Ovary (tissue), 10 donors: ENCODE measurements at regions of chr15 and their contacts with region 1.

Region 1: DNA sequence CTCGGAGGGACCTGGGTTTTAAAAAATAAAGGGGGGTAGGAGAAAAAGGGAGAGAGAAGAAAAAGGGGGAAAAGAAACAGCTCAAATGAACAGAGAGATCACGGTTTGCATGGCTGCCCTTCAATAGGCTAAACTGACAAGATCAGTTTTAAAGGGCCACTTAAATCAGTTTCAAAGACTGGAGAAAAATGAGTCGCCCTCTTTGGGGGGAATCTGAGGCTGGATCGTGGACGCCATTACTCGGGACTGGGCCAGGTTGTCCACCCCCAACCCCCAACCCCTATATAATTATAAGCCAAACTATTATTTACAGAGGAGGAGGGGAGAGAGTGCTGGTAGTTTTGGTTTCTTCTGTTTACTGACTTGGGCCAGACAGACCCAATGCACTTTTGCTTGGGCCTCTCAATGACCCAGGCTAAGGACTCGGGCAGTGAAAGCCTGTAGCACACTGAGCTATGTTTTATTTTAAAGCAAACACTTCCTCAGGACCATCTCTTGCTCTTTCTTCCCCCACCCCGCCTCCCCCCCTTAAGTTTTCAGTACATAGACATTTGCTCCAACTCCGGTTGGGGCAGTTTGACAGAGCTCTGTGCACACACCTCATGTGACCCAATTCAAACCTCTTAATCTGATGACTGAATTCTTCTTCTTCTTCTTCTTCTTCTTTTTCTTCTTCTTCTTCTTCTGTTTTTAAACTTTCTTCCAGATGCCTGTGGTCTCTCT is 6.3 kb downstream of the NR2F2 start:
- DNase-seq: peak in 3 of 5 donors; percentile 18 to 44 (median 25)
- H3K4me3 ChIP-seq: peak overlapping the region; percentile 46
- H3K27ac ChIP-seq: peak overlapping the region; percentile 99
- H3K4me1 ChIP-seq: no peaks in the 10 kb centered on the region
- H3K27me3 ChIP-seq: no peaks in the 10 kb centered on the region
- CTCF ChIP-seq: no peak
- EP300 ChIP-seq: no peak
- POLR2A ChIP-seq: no peak

Region 2: DNA sequence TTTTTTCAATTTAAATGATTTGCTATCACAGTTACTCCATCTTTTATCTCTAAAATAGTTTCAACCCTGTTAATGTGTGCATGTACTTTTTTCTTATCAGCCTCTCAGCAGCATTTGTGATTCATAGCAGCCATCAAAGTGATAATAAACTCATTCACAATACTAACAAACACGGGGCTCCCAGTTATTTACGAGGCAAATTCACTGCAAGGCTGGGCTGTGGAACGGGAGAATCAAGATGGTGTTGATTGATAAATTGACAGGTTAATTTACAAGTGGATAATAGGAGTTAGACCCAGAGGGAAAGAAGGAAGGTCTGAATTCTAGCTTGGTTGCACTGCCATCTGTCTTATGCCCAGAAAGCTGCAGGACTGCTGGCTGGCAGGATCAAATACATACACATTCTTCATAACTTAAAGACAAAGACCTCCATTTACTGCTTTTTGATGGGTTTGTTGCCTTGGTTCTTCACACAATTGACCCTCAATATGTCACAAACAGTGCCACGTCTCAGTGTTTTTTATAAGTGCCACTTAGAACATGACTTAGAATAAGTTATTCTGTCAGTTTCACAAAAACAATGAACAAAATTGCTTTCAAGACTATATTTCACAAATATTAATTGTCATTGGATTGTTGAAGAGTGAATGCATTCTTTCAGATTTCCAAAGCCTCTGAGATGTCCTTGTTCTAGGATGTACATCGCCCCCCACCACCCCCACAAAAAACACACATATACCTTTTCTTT is 556.5 kb after region 1 on chr15:
- intact Hi-C with region 1: loop called in 1 of 4 experiments (anchors 5 kb)
- DNase-seq: peak in 1 of 5 donors; percentile 30
- H3K4me3 ChIP-seq: no peak overlapping the region
- H3K27ac ChIP-seq: no peak overlapping the region
- H3K4me1 ChIP-seq: no peaks in the 10 kb centered on the region
- H3K27me3 ChIP-seq: no peaks in the 10 kb centered on the region
- CTCF ChIP-seq: peak in 2 of 3 donors; percentile 27 to 33
- EP300 ChIP-seq: no peak
- POLR2A ChIP-seq: no peak